Mammary epithelial cell (primary cell): ENCODE measurements at regions of chr2 and their contacts with region 1.

Region 1: GRCh38 chr2:172172513-172173173 is 69.9 kb upstream of the DLX2 start:
- DNase-seq: peak; percentile 66
- H3K4me3 ChIP-seq: peak overlapping the region; percentile 56 to 74 (median 64)
- H3K27ac ChIP-seq: peak overlapping the region; percentile 53
- H3K4me1 ChIP-seq: peaks cover 17% of the 10 kb centered on the region
- H3K27me3 ChIP-seq: no peaks in the 10 kb centered on the region
- CTCF ChIP-seq: peak; percentile 70 to 87

Region 2: DNA sequence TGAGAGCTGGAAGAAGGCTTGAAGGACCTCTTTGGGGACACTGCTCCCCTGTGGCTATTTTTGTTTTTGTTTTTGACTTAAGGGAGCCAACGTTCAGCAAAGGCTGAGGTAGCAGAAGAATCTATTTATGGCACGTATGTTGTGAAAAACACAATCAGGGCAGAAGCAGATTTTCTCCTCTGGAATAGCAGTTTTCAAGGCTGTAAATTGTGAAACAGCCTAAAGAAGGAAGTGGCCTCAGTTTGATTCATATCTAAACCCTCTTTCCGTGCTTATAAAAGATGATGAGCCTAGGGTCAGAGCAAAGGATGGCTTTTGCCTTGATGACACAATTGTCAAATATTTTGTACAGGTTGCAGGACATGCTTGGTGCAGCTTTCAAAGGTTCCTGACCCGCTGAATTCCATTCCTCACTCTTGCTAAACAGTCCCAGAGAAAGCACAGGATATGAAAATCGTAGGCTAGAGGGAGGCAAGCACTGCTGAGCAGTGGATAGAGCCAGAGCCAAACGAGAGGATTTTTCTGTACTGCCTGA is 36.2 kb after region 1 on chr2:
- CTCF ChIA-PET with region 1: no interaction called
- dilution Hi-C with region 1: no loop called
- in situ Hi-C with region 1: no loop called
- intact Hi-C with region 1: loop called (anchors 2 kb)
- DNase-seq: peak; percentile 80
- H3K4me3 ChIP-seq: no peak overlapping the region
- H3K27ac ChIP-seq: peak overlapping the region; percentile 47
- H3K4me1 ChIP-seq: peaks cover 28% of the 10 kb centered on the region
- H3K27me3 ChIP-seq: no peaks in the 10 kb centered on the region
- CTCF ChIP-seq: peak in 1 of 2 donors; percentile 28

Region 3: GRCh38 chr2:172285010-172285621 is 112.5 kb after region 1 on chr2:
- CTCF ChIA-PET with region 1: no interaction called
- dilution Hi-C with region 1: no loop called
- in situ Hi-C with region 1: loop called (anchors 10 kb)
- intact Hi-C with region 1: loop called (anchors 1 kb)
- DNase-seq: peak; percentile 28
- H3K4me3 ChIP-seq: no peak overlapping the region
- H3K27ac ChIP-seq: peak overlapping the region; percentile 26
- H3K4me1 ChIP-seq: peaks cover 54% of the 10 kb centered on the region
- H3K27me3 ChIP-seq: no peaks in the 10 kb centered on the region
- CTCF ChIP-seq: no peak

Region 4: DNA sequence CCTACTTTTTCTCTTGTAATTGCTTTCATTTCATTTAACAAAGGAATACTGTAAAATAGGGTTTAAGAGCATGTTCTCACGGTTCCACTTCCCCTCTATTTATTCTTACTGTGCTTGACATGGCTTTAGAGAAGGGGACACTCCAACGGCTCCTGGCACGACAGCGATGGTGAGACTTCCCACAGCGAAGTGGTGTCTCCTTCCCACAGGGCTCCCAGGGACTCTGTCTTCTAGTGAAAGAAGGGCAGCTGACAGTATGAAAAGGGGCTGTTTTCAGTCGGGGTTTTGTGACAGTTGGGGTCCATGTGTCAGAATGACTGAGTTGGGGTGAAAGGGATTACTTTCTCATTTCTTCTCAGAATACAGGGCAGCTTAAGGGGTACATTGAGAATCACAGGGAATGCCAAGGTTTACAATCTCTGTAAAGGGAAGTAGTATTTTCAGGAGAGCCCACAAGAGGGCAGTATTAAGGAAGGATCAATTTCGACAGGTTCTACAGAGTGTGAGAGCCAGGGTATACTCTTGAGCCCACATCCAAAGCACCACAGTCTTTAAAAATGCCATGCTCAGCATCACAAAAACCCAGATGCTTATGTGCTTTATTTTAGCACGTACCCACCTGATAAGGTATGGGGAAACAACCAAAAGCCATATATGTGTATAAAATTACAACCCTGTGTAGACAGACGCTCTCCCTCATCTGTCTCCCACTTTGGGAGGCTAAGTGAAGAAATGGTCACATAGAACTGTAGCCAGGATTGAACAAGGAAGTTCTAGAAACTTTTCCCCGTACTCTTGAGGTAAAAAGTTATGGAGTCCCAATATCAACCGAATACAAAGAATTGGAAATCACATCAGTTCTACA is 531.7 kb after region 1 on chr2:
- CTCF ChIA-PET with region 1: no interaction called
- dilution Hi-C with region 1: no loop called
- in situ Hi-C with region 1: loop called in 1 of 2 experiments (anchors 25 kb)
- intact Hi-C with region 1: loop called (anchors 1 kb)
- DNase-seq: peak; percentile 25
- H3K4me3 ChIP-seq: no peak overlapping the region
- H3K27ac ChIP-seq: no peak overlapping the region
- H3K4me1 ChIP-seq: peaks cover 14% of the 10 kb centered on the region
- H3K27me3 ChIP-seq: no peaks in the 10 kb centered on the region
- CTCF ChIP-seq: peak; percentile 51 to 62